ENCODE measurements at regions of chr16 and their contacts with region 1.

Region 1: DNA sequence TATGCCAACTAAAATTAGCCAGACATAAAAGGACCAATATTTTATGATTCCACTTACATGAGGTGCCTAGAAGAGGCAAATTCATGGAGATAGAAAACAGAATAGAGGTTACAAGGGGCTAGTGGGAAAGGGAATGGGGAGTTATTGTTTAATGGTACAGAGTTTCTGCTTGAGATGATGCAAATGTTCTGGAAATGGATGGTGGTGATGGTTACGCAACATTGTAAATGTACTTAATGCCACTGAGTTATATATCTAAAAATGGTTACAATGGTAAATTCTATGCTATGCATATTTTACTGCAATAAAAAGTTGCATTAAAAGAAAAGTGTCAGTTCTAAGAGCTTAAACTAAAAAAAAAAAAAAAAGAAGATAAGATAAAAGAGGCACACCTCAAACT is 17.9 kb downstream of the MT1X start:
- DNase-seq: no peak
- H3K4me3 ChIP-seq: no peak overlapping the region
- H3K27ac ChIP-seq: no peak overlapping the region
- H3K27me3 ChIP-seq: no peaks in the 10 kb centered on the region
- CTCF ChIP-seq: no peak

Region 2: DNA sequence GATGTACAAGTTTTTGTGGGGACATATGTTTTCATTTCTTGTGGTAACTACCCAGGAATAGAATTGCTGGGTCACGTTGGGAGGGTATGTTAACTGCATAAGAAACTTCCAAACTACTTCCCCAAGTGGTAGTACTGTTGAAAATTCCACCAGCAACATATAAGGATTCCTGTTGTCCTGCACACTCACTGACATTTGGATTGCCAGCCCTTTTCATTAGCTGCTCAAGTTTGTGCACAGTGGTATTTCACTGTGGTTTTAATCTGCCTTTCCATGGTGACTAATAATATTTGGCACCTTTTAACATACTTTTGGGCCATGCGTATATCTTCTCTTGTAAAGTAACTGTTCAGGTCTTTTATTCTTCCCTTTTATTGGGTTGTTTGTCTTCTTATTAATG is 405.6 kb before region 1 on chr16:
- CTCF ChIA-PET with region 1: no interaction called
- POLR2A ChIA-PET with region 1: no interaction called
- DNase-seq: peak; percentile 45
- H3K4me3 ChIP-seq: no peak overlapping the region
- H3K27ac ChIP-seq: no peak overlapping the region
- H3K27me3 ChIP-seq: peaks cover 1% of the 10 kb centered on the region
- CTCF ChIP-seq: no peak

Region 3: GRCh38 chr16:56451753-56452689 is 248.2 kb before region 1 on chr16:
- CTCF ChIA-PET with region 1: interaction called, 12 read pairs
- POLR2A ChIA-PET with region 1: no interaction called
- DNase-seq: no peak
- H3K4me3 ChIP-seq: peak overlapping the region; percentile 87
- H3K27ac ChIP-seq: peak overlapping the region; percentile 84
- H3K27me3 ChIP-seq: no peaks in the 10 kb centered on the region
- CTCF ChIP-seq: no peak

Region 4: DNA sequence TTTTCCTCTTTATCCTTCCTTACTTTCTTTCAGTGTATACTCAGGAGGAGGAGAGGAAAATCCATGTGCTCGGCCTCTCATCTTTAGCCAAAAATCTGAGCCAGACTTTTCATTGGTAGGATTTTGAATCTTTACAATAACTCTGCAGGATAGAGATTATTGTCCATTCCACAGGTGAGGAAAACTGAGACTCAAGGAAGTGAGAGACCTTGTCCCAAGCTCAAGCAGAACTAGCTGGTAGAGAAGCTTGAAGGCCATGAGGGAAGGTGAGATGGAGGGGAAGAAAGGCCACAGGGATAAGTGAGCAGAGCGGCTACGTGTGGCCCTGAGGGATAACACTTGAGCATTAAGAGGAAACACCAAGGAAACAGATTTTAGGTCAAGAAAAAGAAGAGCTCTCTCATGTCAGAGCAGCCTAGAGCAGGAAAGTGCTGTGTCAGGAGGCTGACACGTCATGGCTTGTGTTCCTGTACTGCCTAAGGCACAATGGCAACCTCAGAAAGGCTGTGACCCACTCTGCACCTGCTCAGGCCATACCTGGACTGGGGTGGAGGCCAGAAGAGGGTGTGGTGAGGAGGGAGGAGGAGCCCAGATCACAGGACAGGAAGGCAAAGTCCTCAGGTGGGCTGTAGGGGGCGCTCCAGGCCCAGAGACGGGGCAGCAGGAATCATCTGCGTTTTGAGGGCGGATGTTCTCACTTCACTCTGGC is 123.5 kb before region 1 on chr16:
- CTCF ChIA-PET with region 1: interaction called, 71 read pairs
- POLR2A ChIA-PET with region 1: interaction called, 3 read pairs
- DNase-seq: peak; percentile 8
- H3K4me3 ChIP-seq: no peak overlapping the region
- H3K27ac ChIP-seq: no peak overlapping the region
- H3K27me3 ChIP-seq: no peaks in the 10 kb centered on the region
- CTCF ChIP-seq: peak; percentile 76

Region 5: DNA sequence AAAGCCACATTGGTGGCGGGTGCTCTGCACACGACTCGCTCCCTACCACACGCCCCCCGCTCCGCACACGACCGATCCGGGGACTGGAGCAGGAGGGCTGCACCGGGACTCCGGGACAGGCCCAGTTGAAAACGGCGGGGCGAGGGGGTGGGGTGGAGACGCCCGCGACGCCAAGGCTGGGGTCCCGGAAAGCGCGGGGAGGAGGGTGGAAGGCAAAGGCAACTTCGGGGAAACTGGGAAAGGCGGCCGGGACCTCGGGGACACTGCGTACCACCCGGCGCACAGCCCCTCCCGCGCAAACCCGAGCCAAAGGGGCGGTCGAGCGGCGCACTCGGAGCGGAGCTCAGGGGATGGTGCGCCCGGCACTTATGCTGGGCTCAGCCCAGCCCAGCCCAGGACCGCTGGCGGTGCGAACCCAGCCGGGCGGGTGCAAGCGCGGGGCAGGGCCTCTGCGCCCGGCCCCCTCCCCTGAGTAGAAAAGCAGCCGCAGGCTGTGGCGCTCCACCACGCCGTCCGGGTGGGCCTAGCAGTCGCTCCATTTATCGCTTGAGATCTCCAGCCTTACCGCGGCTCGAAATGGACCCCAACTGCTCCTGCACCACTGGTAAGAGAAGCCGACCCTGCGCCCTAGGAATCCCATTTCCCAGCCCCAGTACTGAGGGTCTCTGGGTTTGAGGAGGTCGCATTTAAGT is 67.9 kb before region 1 on chr16 and contains the start of gene MT1M:
- CTCF ChIA-PET with region 1: no interaction called
- POLR2A ChIA-PET with region 1: no interaction called
- DNase-seq: no peak
- H3K4me3 ChIP-seq: peak within 1 kb of the TSS; percentile 32
- H3K27ac ChIP-seq: no peak within 1 kb of the TSS
- H3K27me3 ChIP-seq: peaks cover 52% of the 10 kb centered on the region
- CTCF ChIP-seq: no peak
- polyA plus RNA-seq, gene MT1M: 0.10 and 0.38 TPM in 2 replicates

Region 6: GRCh38 chr16:56673921-56674320 is 26.3 kb before region 1 on chr16:
- CTCF ChIA-PET with region 1: interaction called, 19 read pairs
- POLR2A ChIA-PET with region 1: no interaction called
- DNase-seq: no peak
- H3K4me3 ChIP-seq: no peak overlapping the region
- H3K27ac ChIP-seq: no peak overlapping the region
- H3K27me3 ChIP-seq: peaks cover 42% of the 10 kb centered on the region
- CTCF ChIP-seq: peak; percentile 58

Region 7: DNA sequence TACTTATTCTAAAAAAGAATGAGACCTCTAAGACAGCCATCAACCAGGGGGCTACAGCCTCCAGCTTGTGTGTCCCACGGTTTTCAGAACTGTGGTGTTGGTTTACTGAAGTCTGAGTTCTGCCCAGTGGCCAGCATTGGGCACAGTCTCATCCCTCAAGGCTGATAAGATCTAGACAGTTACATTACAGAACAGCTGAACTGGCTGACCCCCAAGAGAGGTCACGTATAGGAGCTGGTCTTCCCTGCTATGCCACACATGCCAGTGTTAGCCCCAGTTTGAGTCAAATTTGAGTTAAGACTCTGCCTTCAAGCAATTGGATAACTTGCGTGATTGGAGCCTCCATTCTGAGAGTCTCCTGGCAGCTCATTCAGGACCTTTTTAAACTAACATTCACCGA is 14.9 kb after region 1 on chr16:
- CTCF ChIA-PET with region 1: interaction called, 28 read pairs
- POLR2A ChIA-PET with region 1: no interaction called
- DNase-seq: no peak
- H3K4me3 ChIP-seq: no peak overlapping the region
- H3K27ac ChIP-seq: no peak overlapping the region
- H3K27me3 ChIP-seq: peaks cover 7% of the 10 kb centered on the region
- CTCF ChIP-seq: no peak

Region 8: GRCh38 chr16:56781528-56781961 is 81.3 kb after region 1 on chr16:
- CTCF ChIA-PET with region 1: no interaction called
- POLR2A ChIA-PET with region 1: no interaction called
- DNase-seq: no peak
- H3K4me3 ChIP-seq: no peak overlapping the region
- H3K27ac ChIP-seq: no peak overlapping the region
- H3K27me3 ChIP-seq: no peaks in the 10 kb centered on the region
- CTCF ChIP-seq: no peak